ENCODE measurements at regions of chr20 and their contacts with region 1.

Region 1: GRCh38 chr20:51643390-51643789 is 100.9 kb upstream of the NFATC2 start:
- DNase-seq: no peak
- ATAC-seq: no peak

Region 2: GRCh38 chr20:51789434-51789833 is 146.0 kb after region 1 on chr20:
- intact Hi-C with region 1: no loop called
- DNase-seq: no peak
- ATAC-seq: no peak

Region 3: DNA sequence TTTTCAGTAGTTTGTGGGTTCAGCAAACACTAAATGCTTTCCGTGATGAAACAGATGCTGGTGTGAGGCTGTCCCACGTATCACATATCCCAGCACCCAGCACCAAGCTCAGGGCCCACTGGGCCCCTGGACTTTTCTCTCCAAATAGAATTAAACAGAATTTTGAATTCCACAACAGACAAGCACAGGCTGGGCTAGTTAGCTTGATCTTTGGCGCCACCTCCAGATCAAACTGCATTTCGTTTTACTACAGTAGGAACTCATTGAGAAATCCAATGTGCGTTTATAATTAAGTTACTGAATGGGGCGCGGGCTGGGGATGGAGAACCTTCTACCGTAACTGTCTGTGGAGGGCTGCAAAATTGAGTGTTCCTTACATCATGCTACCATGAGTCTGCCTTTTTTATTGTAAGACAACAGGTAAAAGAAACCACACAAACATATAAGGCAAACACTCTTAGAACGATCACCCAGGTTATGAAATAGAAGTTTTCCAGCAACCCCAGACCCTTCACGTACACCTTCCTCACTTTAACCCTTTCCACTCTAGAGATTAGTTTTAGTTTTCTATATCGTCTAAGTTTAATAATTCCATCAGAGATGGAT is 440.3 kb after region 1 on chr20:
- intact Hi-C with region 1: loop called (anchors 10 kb)
- DNase-seq: peak; percentile 77
- ATAC-seq: peak; percentile 73